ENCODE measurements at regions of chr5 and their contacts with region 1.

Region 1: DNA sequence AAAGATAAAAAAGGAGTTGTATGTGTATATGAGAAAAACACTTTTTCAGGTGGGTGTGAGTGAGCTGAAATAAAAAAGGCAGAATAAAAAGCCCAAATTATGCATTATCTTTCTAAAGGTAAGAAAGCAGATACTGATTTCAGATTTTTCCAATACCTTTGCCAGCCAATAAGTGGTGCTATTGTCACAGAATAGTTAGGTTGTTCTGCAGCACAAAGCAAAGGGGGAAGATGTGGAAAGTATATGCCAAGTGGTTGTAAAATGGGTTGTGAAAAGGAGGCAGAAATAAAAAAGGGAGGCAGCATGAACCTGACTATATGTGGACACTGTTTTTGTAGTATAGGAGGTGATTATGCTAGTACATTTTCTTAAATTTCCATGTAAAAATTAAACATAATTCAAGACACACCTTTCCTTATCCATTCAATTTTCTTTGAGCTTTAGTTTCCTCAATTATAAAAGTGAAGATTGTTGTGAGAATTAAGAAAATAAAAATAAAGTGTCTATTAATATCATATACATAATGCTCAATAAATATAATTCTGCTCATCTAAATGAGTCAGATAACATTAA is 106.7 kb downstream of the SMIM15 start:
- DNase-seq: peak; percentile 23
- H3K4me3 ChIP-seq: no peak overlapping the region
- H3K27ac ChIP-seq: no peak overlapping the region
- H3K4me1 ChIP-seq: no peaks in the 10 kb centered on the region
- CTCF ChIP-seq: peak; percentile 80

Region 2: GRCh38 chr5:61357745-61358144 is 302.2 kb after region 1 on chr5:
- CTCF ChIA-PET with region 1: no interaction called
- POLR2A ChIA-PET with region 1: no interaction called
- intact Hi-C with region 1: loop called (anchors 10 kb)
- DNase-seq: peak; percentile 11
- H3K4me3 ChIP-seq: no peak overlapping the region
- H3K27ac ChIP-seq: no peak overlapping the region
- H3K4me1 ChIP-seq: no peaks in the 10 kb centered on the region
- CTCF ChIP-seq: peak; percentile 75

Region 3: DNA sequence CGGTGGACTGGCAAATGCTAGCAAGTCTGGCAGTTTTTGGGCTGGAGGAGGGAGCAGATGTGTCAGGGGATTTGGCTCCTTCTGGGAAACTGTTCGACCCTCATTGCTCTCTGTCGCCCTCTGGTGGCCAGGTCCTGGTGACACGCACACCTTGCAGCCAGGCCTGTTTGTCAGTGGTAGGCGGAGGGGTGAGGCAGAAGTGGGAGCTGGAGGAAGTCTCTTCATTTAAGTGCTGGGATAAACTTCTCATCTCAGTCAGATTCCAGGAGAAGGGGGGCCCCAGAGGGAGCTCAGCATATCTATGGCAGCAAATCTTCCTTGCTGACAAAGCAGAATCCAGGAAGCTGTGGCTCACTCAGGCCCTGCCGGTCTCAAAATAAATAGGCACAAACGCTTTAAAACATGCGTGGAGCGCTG is 603.1 kb after region 1 on chr5:
- CTCF ChIA-PET with region 1: no interaction called
- POLR2A ChIA-PET with region 1: no interaction called
- intact Hi-C with region 1: loop called (anchors 5 kb)
- DNase-seq: peak; percentile 62
- H3K4me3 ChIP-seq: no peak overlapping the region
- H3K27ac ChIP-seq: no peak overlapping the region
- H3K4me1 ChIP-seq: no peaks in the 10 kb centered on the region
- CTCF ChIP-seq: peak; percentile 95

Measured in OCI-LY7 (cell line).